ENCODE measurements at regions of chr1 and their contacts with region 1.

Region 1: DNA sequence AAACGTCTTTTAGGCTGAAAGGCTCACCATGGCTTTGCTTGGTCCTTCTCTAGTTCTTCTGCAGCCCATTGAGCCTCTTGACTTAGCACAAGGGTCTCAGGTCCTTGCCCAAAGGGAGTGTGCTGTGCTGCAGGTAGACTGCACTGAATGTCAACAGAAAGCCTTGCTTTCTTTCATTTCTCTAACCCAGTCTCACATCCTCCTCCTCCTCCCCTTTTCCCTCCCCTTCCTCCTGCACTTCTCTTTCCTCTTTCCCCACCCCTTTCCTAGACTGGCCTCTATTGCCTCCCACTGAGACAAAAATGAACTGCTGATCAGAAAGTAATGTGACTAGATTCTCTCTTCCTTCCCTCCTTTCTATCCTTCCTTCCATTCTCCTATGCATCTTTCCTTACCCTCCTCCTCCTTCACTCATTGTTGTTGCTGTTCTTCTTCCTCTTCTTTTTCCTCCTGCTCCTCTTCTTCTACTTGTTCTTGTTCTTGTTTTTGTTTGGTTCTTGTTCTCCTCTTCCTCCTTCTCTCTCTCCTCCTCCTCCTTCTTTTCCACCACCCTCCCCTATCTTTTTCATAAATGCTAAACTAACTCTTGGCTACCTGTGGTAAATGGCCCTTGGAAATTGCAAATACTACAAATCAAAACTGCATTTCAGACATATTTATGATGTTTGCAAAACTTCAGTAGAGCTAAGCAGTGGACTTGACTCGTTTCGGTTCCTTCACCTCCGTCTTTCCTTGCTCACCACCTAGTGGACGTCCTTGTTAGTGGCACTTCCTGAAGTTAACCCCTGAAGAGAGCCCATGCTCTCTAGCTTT is at the start of gene SELL:
- DNase-seq: peak; percentile 85
- ATAC-seq: peak; percentile 78
- H3K4me3 ChIP-seq: peak within 1 kb of the TSS; percentile 50 to 99 (median 82)
- H3K4me3 Mint-ChIP-seq: peak within 1 kb of the TSS; percentile 90
- H3K27ac ChIP-seq: peak within 1 kb of the TSS; percentile 45 to 87
- H3K27ac Mint-ChIP-seq: peak within 1 kb of the TSS; percentile 79
- H3K4me1 ChIP-seq: peaks cover 15 to 21% of the 10 kb centered on the region in 2 donors
- H3K4me1 Mint-ChIP-seq: peaks cover 32% of the 10 kb centered on the region
- H3K27me3 ChIP-seq: no peaks in the 10 kb centered on the region
- H3K27me3 Mint-ChIP-seq: peaks cover 3% of the 10 kb centered on the region
- CTCF ChIP-seq: peak; percentile 91
- total RNA-seq, gene SELL: 250 and 262 TPM in 2 replicates

Region 2: DNA sequence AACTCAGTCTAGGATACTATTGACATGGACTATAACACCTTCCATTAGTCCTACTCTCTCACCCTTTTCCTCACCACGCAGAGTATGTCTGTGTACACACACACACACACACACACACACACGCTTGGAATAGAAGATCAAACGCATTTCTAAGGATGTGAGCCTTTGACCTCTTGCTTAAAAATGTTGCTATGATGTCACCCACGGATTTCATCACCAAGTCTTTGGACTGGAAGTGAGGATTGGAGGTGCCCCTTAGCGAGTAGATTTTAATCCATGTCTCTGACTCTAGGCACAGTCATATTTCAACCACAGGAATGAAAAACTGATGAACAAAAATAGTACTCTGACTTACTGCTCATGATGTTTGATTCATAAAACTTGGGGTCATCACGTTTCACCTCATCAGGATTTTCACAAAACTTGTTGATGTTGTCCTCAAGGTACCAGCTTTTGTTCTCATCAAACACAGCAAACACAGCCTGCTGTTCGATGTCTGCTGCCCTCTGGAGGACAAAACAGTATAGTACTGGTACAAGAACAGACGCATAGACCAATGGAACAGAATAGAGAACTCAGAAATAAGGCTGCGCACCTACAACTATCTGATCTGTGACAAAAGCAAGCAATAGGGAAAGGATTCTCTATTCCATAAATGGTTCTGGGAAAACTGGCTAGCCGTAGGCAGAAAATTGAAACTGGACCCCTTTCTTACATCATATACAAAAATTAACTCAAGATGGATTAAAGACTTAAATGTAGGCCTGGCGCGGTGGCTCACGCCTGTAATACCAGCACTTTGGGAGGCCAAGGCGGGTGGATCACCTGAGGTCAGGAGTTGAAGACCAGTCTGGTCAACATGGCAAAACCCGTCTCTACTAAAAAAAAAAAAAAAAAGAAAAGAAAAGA is 165.3 kb before region 1 on chr1:
- CTCF ChIA-PET with region 1: interaction called, 70 read pairs
- POLR2A ChIA-PET with region 1: no interaction called
- intact Hi-C with region 1: loop called (anchors 1 kb)
- DNase-seq: peak; percentile 81
- ATAC-seq: peak; percentile 82
- H3K4me3 ChIP-seq: no peak overlapping the region
- H3K4me3 Mint-ChIP-seq: no peak overlapping the region
- H3K27ac ChIP-seq: no peak overlapping the region
- H3K27ac Mint-ChIP-seq: no peak overlapping the region
- H3K4me1 ChIP-seq: no peaks in the 10 kb centered on the region
- H3K4me1 Mint-ChIP-seq: no peaks in the 10 kb centered on the region
- H3K27me3 ChIP-seq: no peaks in the 10 kb centered on the region
- H3K27me3 Mint-ChIP-seq: peaks cover 13% of the 10 kb centered on the region
- CTCF ChIP-seq: peak; percentile 78

Region 3: GRCh38 chr1:169601093-169601881 is 110.4 kb before region 1 on chr1:
- CTCF ChIA-PET with region 1: interaction called, 340 read pairs
- POLR2A ChIA-PET with region 1: interaction called, 6 read pairs
- intact Hi-C with region 1: loop called (anchors 1 kb)
- DNase-seq: peak; percentile 61
- ATAC-seq: no peak
- H3K4me3 ChIP-seq: no peak overlapping the region
- H3K4me3 Mint-ChIP-seq: peak overlapping the region; percentile 20
- H3K27ac ChIP-seq: peak overlapping the region in 1 of 2 donors; percentile 62
- H3K27ac Mint-ChIP-seq: peak overlapping the region; percentile 77
- H3K4me1 ChIP-seq: peaks cover 39 to 40% of the 10 kb centered on the region in 2 donors
- H3K4me1 Mint-ChIP-seq: peaks cover 42% of the 10 kb centered on the region
- H3K27me3 ChIP-seq: no peaks in the 10 kb centered on the region
- H3K27me3 Mint-ChIP-seq: no peaks in the 10 kb centered on the region
- CTCF ChIP-seq: peak; percentile 70

Region 4: DNA sequence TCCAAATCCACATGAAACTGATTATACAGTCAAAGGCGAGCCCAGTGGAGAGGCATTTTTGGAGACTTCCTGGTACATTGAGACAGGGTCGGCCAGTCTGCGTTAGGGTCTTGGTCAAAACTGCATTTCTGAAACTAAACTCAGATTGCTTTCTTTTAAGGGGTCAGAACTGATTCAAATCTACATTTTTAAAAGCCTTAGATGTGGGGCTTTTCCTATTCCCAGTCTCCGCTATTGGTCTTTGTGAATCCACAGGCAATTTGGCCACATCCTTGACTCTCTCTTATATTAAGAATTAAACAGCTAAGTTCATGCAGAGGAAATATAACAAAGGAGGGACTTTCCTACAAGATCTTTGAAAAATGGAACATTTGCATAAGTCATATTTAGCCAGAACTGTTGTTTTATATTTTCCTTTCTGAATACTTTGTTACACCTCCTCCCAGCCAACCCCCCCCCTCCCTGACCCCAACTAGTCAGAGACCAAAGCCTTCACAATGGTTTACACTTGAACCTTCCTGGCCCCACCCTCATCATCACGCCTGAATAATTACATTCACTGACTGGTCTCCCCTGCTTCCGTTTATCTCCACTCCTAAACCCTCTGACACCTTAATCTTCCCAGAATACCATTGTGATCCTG is 31.2 kb before region 1 on chr1:
- CTCF ChIA-PET with region 1: interaction called, 13 read pairs
- POLR2A ChIA-PET with region 1: no interaction called
- intact Hi-C with region 1: loop called (anchors 1 kb)
- DNase-seq: peak; percentile 70
- ATAC-seq: peak; percentile 84
- H3K4me3 ChIP-seq: peak overlapping the region in 2 of 5 experiments; percentile 6 to 16
- H3K4me3 Mint-ChIP-seq: peak overlapping the region; percentile 75
- H3K27ac ChIP-seq: peak overlapping the region; percentile 88 to 92
- H3K27ac Mint-ChIP-seq: peak overlapping the region; percentile 95
- H3K4me1 ChIP-seq: peaks cover 84 to 96% of the 10 kb centered on the region in 2 donors
- H3K4me1 Mint-ChIP-seq: peaks cover 61% of the 10 kb centered on the region
- H3K27me3 ChIP-seq: no peaks in the 10 kb centered on the region
- H3K27me3 Mint-ChIP-seq: no peaks in the 10 kb centered on the region
- CTCF ChIP-seq: no peak

Region 5: GRCh38 chr1:169794530-169795416 is 83.1 kb after region 1 on chr1 and contains the start of gene METTL18:
- CTCF ChIA-PET with region 1: interaction called, 11 read pairs
- POLR2A ChIA-PET with region 1: interaction called, 3 read pairs
- intact Hi-C with region 1: loop called (anchors 2 kb)
- DNase-seq: peak; percentile 96
- ATAC-seq: peak; percentile 99
- H3K4me3 ChIP-seq: peak within 1 kb of the TSS; percentile 70 to 99 (median 94)
- H3K4me3 Mint-ChIP-seq: peak within 1 kb of the TSS; percentile 96
- H3K27ac ChIP-seq: peak within 1 kb of the TSS; percentile 72 to 91
- H3K27ac Mint-ChIP-seq: peak within 1 kb of the TSS; percentile 96
- H3K4me1 ChIP-seq: peaks cover 15 to 16% of the 10 kb centered on the region in 2 donors
- H3K4me1 Mint-ChIP-seq: peaks cover 45% of the 10 kb centered on the region
- H3K27me3 ChIP-seq: no peaks in the 10 kb centered on the region
- H3K27me3 Mint-ChIP-seq: no peaks in the 10 kb centered on the region
- CTCF ChIP-seq: no peak
- total RNA-seq, gene METTL18: 16.9 and 18.9 TPM in 2 replicates

Region 6: DNA sequence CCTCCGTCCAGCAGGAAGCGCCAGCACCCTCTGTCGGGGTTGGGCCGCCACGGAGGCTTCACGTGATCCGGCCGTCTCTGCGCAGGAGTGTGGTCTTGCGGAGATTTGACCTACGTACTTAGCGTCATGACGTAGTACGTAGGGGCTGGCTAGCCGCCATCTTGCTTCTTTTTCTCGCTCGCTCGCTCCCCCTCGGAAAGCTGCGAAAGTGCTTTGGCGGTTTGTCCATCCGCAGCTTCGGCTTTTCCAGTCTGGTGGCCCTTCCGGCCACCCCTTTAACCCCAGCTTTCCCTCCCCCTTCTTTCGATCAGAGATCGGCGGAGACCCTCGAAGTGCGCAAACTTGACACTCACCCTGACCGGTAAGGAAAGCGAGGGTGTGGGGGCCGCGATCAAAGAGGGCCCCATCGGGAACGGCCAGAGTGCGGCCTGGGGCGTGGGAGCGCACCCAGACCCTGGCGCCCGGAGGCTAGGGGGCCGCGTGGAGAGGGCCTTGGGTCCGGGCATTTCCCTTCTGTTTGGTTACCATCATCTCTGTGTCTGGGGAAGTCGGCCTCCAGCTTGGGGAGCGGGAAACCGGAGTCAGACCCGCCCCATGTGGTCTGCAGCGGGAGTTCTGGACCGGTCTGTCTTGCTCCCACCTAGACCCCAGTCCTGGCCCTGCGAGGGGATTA is 1773.8 kb after region 1 on chr1 and contains the start of gene PRRC2C:
- CTCF ChIA-PET with region 1: no interaction called
- POLR2A ChIA-PET with region 1: no interaction called
- intact Hi-C with region 1: loop called (anchors 10 kb)
- DNase-seq: peak; percentile 97
- ATAC-seq: peak; percentile 92
- H3K4me3 ChIP-seq: peak within 1 kb of the TSS; percentile 97 to 100 (median 99)
- H3K4me3 Mint-ChIP-seq: peak within 1 kb of the TSS; percentile 93
- H3K27ac ChIP-seq: peak within 1 kb of the TSS; percentile 99 to 100
- H3K27ac Mint-ChIP-seq: peak within 1 kb of the TSS; percentile 94
- H3K4me1 ChIP-seq: peaks cover 25 to 47% of the 10 kb centered on the region in 2 donors
- H3K4me1 Mint-ChIP-seq: peaks cover 47% of the 10 kb centered on the region
- H3K27me3 ChIP-seq: no peaks in the 10 kb centered on the region
- H3K27me3 Mint-ChIP-seq: no peaks in the 10 kb centered on the region
- CTCF ChIP-seq: peak; percentile 83
- total RNA-seq, gene PRRC2C: 300 and 305 TPM in 2 replicates